ENCODE measurements at regions of chr4 and their contacts with region 1.

Region 1: DNA sequence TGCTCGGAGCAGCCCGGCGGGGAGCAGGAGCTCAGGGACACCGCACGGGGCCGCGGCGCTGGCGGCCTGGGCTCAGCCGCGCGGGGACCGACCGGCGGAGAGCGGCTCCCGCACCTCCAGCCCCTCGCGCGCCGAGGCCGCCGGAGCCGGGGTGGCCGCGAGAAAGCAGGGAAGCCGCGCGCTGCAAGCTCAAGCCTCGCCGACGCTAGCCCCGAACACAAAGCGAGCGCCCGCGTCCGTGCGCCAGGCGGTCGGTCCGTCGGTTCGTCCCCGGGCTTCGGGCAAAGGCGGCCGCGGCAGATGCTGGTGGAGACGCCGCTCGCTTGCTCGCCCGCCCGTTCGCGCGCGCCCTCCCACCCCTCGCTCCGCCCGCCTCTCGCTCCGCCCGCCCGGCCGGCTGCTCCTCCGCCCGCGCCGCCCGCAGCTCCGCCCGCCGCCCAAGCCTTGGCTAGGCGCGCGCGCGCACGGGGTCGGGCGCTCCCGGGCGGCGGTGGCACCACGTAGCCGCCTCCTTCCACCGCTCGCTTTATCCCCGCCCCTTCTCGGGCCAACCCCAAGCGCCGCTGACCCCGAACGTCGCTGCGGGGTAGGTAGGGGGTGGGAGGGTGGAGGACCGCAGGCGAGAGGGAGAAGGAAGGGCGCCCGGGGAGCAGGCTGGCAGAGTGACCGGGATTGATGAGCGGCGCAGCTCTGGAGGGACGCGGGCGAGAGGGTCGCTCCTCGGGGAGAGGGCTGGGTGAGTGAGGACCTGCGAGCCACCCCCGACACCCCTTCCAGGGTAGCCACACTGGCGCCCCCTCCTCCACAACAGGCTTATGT is at the start of gene TSPAN5:
- DNase-seq: peak; percentile 77 to 83 (median 80)
- H3K4me3 ChIP-seq: peak within 1 kb of the TSS; percentile 95 to 99
- H3K4me3 Mint-ChIP-seq: peak within 1 kb of the TSS; percentile 91 to 100 (median 96)
- H3K27ac ChIP-seq: peak within 1 kb of the TSS; percentile 60
- H3K27ac Mint-ChIP-seq: peak within 1 kb of the TSS; percentile 59 to 96 (median 92)
- H3K4me1 ChIP-seq: peaks cover 82% of the 10 kb centered on the region
- H3K4me1 Mint-ChIP-seq: peaks cover 55 to 91% (median 74%) of the 10 kb centered on the region in 4 donors
- H3K27me3 ChIP-seq: no peaks in the 10 kb centered on the region
- H3K27me3 Mint-ChIP-seq: no peaks in the 10 kb centered on the region
- total RNA-seq, gene TSPAN5: 16.8 to 17.4 TPM

Region 2: DNA sequence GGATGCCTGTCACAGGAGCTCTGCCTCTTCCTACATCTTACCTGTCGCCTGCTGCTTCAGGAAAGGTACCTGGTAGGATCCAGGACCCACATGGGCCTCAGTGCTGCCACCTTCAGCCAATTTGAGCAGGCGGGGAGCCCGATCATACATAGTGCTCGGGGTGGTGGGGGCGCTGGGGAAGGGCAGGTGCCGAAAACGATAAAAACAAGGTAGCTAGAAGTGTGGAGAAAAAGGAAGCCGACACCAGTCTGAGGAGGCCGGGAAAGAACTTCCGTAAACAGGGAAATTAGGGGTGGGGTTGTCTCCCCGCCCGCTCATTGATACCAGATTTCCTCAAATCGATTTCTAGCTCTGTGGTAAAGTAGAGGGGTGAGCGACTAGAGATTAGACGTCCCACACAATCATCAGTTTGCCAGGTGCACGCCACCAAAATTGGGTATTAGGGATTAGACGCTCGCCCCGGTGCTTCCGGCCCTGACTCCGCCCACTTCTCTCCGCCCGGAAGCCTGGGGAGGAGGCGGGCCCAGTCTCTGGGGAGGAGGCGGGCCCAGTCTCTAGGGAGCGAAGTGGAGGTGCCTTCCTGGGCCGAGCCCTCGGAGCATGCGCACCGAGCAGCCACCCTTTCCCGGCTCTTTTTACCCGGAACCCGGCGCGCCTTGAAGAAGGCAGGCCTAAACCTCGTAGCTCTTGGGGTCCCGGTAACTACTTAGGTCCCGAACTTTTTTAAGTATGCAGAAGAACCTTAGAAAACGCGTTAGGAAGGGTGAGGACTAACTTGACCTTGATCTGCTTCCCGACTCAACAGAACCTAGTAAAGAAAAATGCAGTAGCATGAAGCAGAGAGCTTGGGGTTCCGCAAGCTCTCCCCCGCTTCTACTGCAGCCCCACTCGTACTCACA is 515.2 kb before region 1 on chr4 and contains the start of gene STPG2:
- CTCF ChIA-PET with region 1: interaction called, 3 read pairs
- POLR2A ChIA-PET with region 1: no interaction called
- intact Hi-C with region 1: loop called (anchors 2 kb)
- DNase-seq: peak; percentile 91 to 92 (median 92)
- H3K4me3 ChIP-seq: peak within 1 kb of the TSS; percentile 67 to 69
- H3K4me3 Mint-ChIP-seq: peak within 1 kb of the TSS; percentile 88 to 96 (median 93)
- H3K27ac ChIP-seq: peak within 1 kb of the TSS; percentile 74
- H3K27ac Mint-ChIP-seq: peak within 1 kb of the TSS; percentile 97 to 98 (median 97)
- H3K4me1 ChIP-seq: peaks cover 23% of the 10 kb centered on the region
- H3K4me1 Mint-ChIP-seq: peaks cover 16 to 35% (median 23%) of the 10 kb centered on the region in 4 donors
- H3K27me3 ChIP-seq: no peaks in the 10 kb centered on the region
- H3K27me3 Mint-ChIP-seq: no peaks in the 10 kb centered on the region
- total RNA-seq, gene STPG2: 0.47 to 0.84 TPM

Region 3: GRCh38 chr4:98467627-98468072 is 190.8 kb before region 1 on chr4:
- CTCF ChIA-PET with region 1: interaction called, 7 read pairs
- POLR2A ChIA-PET with region 1: interaction called, 5 read pairs
- intact Hi-C with region 1: loop called (anchors 5 kb)
- DNase-seq: peak; percentile 65 to 71 (median 66)
- H3K4me3 ChIP-seq: peak overlapping the region in 1 of 2 donors; percentile 47
- H3K4me3 Mint-ChIP-seq: peak overlapping the region; percentile 64 to 86 (median 79)
- H3K27ac ChIP-seq: no peak overlapping the region
- H3K27ac Mint-ChIP-seq: peak overlapping the region in 4 of 7 donors; percentile 27 to 74 (median 43)
- H3K4me1 ChIP-seq: peaks cover 19% of the 10 kb centered on the region
- H3K4me1 Mint-ChIP-seq: peaks cover 15 to 32% (median 24%) of the 10 kb centered on the region in 4 donors
- H3K27me3 ChIP-seq: no peaks in the 10 kb centered on the region
- H3K27me3 Mint-ChIP-seq: no peaks in the 10 kb centered on the region

Region 4: DNA sequence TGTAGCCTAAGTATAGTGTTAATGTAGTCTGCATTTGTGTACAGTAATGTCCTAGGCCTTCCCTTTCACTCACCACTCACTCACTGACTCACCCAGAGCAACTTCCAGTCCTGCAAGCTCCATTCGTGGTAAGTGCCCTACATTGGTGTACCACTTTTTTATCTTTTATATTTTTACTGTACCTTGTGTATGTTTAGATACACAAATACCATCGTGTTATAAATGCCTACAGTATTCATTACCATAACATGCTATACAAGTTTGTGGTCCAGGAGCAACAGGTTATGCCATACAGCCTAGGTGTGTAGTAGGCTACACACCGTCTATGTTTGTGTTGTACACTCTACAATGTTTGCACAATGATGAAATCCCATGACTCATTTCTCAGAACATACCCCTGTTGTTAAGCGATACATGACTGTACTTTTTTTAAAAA is 15.5 kb before region 1 on chr4:
- CTCF ChIA-PET with region 1: interaction called, 7 read pairs
- POLR2A ChIA-PET with region 1: interaction called, 26 read pairs
- intact Hi-C with region 1: loop called (anchors 1 kb)
- DNase-seq: no peak
- H3K4me3 ChIP-seq: no peak overlapping the region
- H3K4me3 Mint-ChIP-seq: peak overlapping the region in 7 of 8 donors; percentile 3 to 74 (median 16)
- H3K27ac ChIP-seq: no peak overlapping the region
- H3K27ac Mint-ChIP-seq: peak overlapping the region in 6 of 7 donors; percentile 20 to 84 (median 64)
- H3K4me1 ChIP-seq: peaks cover 70% of the 10 kb centered on the region
- H3K4me1 Mint-ChIP-seq: peaks cover 55 to 83% (median 68%) of the 10 kb centered on the region in 4 donors
- H3K27me3 ChIP-seq: no peaks in the 10 kb centered on the region
- H3K27me3 Mint-ChIP-seq: no peaks in the 10 kb centered on the region

Region 5: DNA sequence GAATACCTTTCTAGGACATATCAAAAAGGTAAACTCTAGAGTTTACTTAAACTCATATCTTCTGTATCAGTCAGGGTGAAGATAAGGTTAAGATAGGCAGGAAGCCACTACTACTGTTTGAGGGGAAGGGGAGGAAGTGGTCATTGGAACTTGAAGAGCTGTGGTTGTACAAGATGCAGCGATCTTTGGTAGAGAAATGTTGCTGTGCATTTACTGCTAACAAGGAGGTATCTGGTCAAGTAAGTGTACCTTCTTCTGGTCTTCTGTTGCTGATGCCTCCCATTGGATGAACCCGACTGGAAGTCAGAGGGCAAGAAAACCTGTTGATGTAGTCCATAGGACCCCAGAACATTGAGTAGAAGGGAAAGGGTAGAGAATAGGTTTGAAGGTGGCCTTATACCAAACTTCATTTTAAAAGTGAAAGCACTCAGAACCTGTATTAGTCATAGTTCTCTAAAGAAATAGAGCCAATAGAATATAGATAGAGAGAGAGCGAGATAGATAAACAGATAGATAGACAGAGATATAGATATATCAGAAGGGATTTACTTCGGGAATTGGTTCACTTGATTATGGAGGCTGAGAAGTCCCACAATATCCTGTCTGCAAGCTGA is 47.8 kb after region 1 on chr4:
- CTCF ChIA-PET with region 1: no interaction called
- POLR2A ChIA-PET with region 1: interaction called, 12 read pairs
- intact Hi-C with region 1: loop called (anchors 1 kb)
- DNase-seq: peak; percentile 72 to 84 (median 78)
- H3K4me3 ChIP-seq: peak overlapping the region; percentile 12 to 34
- H3K4me3 Mint-ChIP-seq: peak overlapping the region; percentile 78 to 95 (median 88)
- H3K27ac ChIP-seq: peak overlapping the region; percentile 32
- H3K27ac Mint-ChIP-seq: peak overlapping the region; percentile 77 to 96 (median 92)
- H3K4me1 ChIP-seq: peaks cover 36% of the 10 kb centered on the region
- H3K4me1 Mint-ChIP-seq: peaks cover 33 to 49% (median 38%) of the 10 kb centered on the region in 4 donors
- H3K27me3 ChIP-seq: no peaks in the 10 kb centered on the region
- H3K27me3 Mint-ChIP-seq: no peaks in the 10 kb centered on the region

Region 6: DNA sequence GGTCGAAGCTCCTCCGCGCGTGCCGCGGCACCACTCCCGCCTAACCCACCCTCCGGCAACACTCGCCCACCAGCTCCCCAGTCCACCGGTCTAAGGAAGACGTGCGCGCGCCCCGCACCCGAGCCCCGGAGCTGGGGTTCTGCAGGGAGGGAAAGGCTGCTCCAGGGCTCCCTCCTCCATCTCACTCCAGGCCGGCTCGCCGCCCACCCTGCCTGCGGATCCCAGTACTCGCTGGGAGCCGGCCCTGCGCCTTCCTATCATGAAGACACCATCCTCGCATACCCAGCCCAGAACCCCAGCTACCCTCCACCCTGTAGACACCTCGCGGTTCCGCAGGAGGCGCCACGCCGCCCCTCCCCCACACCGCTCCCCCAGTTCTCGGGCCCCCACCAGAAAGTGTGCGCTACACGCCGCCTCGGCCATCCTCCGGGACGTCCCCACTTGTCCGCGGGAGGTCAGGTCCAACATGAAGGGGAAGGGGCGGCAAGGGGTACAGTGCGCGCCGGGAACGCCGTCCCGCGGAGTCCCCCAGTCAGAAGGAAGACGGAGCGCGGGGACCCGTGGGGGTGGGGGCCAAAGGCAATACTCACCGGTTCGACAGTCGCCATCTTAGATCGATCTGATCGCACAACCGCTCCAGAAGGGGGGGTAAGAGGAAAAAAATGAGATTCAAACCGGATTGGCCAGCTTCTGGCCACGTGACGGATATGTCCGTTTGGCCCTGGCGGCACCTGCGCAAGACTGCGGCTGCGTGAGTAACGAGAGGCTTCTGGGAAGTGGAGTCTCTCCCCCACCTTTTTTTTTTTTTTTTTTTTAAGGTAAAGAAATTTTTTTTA is 270.2 kb after region 1 on chr4 and contains the start of gene EIF4E:
- CTCF ChIA-PET with region 1: interaction called, 3 read pairs
- POLR2A ChIA-PET with region 1: interaction called, 10 read pairs
- intact Hi-C with region 1: loop called (anchors 2 kb)
- DNase-seq: peak; percentile 97 to 99 (median 98)
- H3K4me3 ChIP-seq: peak within 1 kb of the TSS; percentile 66 to 97
- H3K4me3 Mint-ChIP-seq: peak within 1 kb of the TSS; percentile 92 to 100 (median 98)
- H3K27ac ChIP-seq: peak within 1 kb of the TSS; percentile 82
- H3K27ac Mint-ChIP-seq: peak within 1 kb of the TSS; percentile 94 to 99 (median 98)
- H3K4me1 ChIP-seq: peaks cover 33% of the 10 kb centered on the region
- H3K4me1 Mint-ChIP-seq: peaks cover 17 to 58% (median 30%) of the 10 kb centered on the region in 4 donors
- H3K27me3 ChIP-seq: no peaks in the 10 kb centered on the region
- H3K27me3 Mint-ChIP-seq: peaks cover 0 to 2% of the 10 kb centered on the region in 2 donors
- total RNA-seq, gene EIF4E: 58.2 to 62.5 TPM

Region 7: GRCh38 chr4:99028187-99028586 is 369.7 kb after region 1 on chr4:
- CTCF ChIA-PET with region 1: no interaction called
- POLR2A ChIA-PET with region 1: no interaction called
- intact Hi-C with region 1: no loop called
- DNase-seq: no peak
- H3K4me3 ChIP-seq: no peak overlapping the region
- H3K4me3 Mint-ChIP-seq: no peak overlapping the region
- H3K27ac ChIP-seq: no peak overlapping the region
- H3K27ac Mint-ChIP-seq: peak overlapping the region in 2 of 7 donors; percentile 11 to 67
- H3K4me1 ChIP-seq: peaks cover 38% of the 10 kb centered on the region
- H3K4me1 Mint-ChIP-seq: peaks cover 54 to 74% (median 64%) of the 10 kb centered on the region in 4 donors
- H3K27me3 ChIP-seq: no peaks in the 10 kb centered on the region
- H3K27me3 Mint-ChIP-seq: no peaks in the 10 kb centered on the region

Region 8: GRCh38 chr4:100042227-100042626 is 1383.7 kb after region 1 on chr4:
- CTCF ChIA-PET with region 1: no interaction called
- POLR2A ChIA-PET with region 1: no interaction called
- intact Hi-C with region 1: no loop called
- DNase-seq: no peak
- H3K4me3 ChIP-seq: no peak overlapping the region
- H3K4me3 Mint-ChIP-seq: no peak overlapping the region
- H3K27ac ChIP-seq: no peak overlapping the region
- H3K27ac Mint-ChIP-seq: no peak overlapping the region
- H3K4me1 ChIP-seq: no peaks in the 10 kb centered on the region
- H3K4me1 Mint-ChIP-seq: no peaks in the 10 kb centered on the region
- H3K27me3 ChIP-seq: no peaks in the 10 kb centered on the region
- H3K27me3 Mint-ChIP-seq: no peaks in the 10 kb centered on the region